AG04450 (cell line): ENCODE measurements at regions of chr10 and their contacts with region 1.

Region 1: GRCh38 chr10:68208424-68209042 is 23.4 kb downstream of the ATOH7 start:
- DNase-seq: no peak
- H3K4me3 ChIP-seq: no peak overlapping the region
- H3K27ac ChIP-seq: no peak overlapping the region
- H3K27me3 ChIP-seq: no peaks in the 10 kb centered on the region
- CTCF ChIP-seq: peak; percentile 72

Region 2: DNA sequence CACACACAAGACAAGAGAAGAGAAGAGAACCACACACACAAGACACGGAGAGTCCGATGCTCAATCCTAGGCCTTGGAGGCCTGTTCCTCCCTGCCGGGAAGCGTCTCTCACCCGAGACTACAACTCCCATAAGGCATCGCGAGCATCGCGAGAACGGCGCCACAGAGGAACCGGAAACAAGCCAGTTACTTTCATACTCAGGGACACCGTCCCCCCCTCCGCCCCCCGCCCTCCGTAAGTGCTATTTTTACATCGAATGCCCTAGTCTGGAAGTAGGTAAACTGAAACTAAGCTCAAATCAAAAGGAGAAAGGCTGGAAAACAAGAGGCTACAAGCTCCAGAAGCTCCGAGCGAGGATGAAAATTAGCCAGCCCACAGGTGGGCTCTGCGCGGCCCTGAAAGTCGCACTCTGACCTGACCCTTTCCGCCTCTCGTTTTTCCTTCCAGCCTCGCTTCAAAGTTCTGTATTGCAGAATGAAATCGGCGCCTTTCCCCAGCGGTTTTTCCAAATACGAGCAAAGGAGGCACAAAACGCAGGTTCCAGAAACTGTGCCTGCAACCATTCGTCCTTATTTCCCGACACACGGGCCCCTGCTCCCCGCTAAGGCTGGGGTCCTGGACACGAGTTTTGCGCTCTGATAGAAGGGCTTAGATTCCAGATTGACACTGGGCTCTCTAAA is 359.1 kb before region 1 on chr10:
- CTCF ChIA-PET with region 1: no interaction called
- POLR2A ChIA-PET with region 1: no interaction called
- DNase-seq: peak; percentile 87
- H3K4me3 ChIP-seq: peak overlapping the region; percentile 79
- H3K27ac ChIP-seq: peak overlapping the region; percentile 96
- H3K27me3 ChIP-seq: no peaks in the 10 kb centered on the region
- CTCF ChIP-seq: no peak

Region 3: GRCh38 chr10:68082872-68083271 is 125.7 kb before region 1 on chr10:
- CTCF ChIA-PET with region 1: interaction called, 37 read pairs
- POLR2A ChIA-PET with region 1: no interaction called
- DNase-seq: no peak
- H3K4me3 ChIP-seq: no peak overlapping the region
- H3K27ac ChIP-seq: no peak overlapping the region
- H3K27me3 ChIP-seq: no peaks in the 10 kb centered on the region
- CTCF ChIP-seq: peak; percentile 62

Region 4: GRCh38 chr10:68110027-68110426 is 98.5 kb before region 1 on chr10:
- CTCF ChIA-PET with region 1: no interaction called
- POLR2A ChIA-PET with region 1: no interaction called
- DNase-seq: no peak
- H3K4me3 ChIP-seq: peak overlapping the region; percentile 28
- H3K27ac ChIP-seq: no peak overlapping the region
- H3K27me3 ChIP-seq: no peaks in the 10 kb centered on the region
- CTCF ChIP-seq: no peak

Region 5: DNA sequence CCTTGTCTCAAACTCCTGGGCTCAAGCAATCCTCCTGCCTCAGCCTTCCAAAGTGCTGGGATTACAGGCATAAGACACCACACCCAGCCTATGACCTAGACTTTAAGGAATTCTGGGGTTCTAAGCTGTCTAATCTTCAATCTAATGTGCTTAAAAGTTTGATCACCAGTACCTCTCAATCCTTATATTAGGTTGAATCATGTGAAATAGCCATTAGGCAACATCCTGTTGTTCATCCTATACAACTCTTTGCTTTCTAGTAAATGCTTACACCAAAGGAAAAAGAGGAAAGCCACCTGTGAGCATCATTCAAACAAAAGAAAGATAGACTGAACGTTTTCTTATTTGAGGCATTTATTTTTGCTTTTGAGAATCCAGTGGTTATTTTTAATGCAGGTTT is 32.6 kb before region 1 on chr10:
- CTCF ChIA-PET with region 1: interaction called, 13 read pairs
- POLR2A ChIA-PET with region 1: no interaction called
- DNase-seq: no peak
- H3K4me3 ChIP-seq: no peak overlapping the region
- H3K27ac ChIP-seq: no peak overlapping the region
- H3K27me3 ChIP-seq: no peaks in the 10 kb centered on the region
- CTCF ChIP-seq: no peak

Region 6: GRCh38 chr10:68196701-68197100 is 11.8 kb before region 1 on chr10:
- CTCF ChIA-PET with region 1: interaction called, 15 read pairs
- POLR2A ChIA-PET with region 1: no interaction called
- DNase-seq: no peak
- H3K4me3 ChIP-seq: no peak overlapping the region
- H3K27ac ChIP-seq: no peak overlapping the region
- H3K27me3 ChIP-seq: no peaks in the 10 kb centered on the region
- CTCF ChIP-seq: no peak

Region 7: DNA sequence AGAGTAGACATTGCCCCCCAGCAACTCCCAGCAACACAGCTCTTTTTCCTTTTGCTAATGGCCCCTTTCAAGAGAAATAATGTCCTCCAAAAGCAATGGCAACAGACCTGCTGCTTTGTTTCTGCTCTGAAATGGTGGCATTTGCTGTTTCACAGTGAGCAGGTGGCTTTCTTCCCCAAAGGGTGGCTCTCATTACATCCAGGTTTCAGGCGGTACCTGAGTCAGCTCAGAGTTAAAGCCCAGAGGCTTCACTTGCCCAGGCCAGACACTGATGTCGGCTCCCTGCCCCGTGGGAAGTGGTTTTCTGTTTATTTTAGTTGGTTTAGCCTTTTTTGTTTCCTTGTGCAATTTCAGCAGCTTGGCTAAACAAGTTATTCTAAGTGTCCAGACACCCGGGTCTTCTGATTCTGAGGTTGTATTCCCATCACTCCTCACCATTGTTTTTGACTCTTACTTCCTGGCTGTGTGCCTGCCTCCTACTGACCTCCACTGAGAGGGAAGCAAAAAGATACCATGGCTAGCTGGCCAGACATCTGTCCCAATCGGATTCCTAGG is 31.1 kb after region 1 on chr10:
- CTCF ChIA-PET with region 1: interaction called, 11 read pairs
- POLR2A ChIA-PET with region 1: no interaction called
- DNase-seq: no peak
- H3K4me3 ChIP-seq: no peak overlapping the region
- H3K27ac ChIP-seq: no peak overlapping the region
- H3K27me3 ChIP-seq: peaks cover 19% of the 10 kb centered on the region
- CTCF ChIP-seq: no peak

Region 8: GRCh38 chr10:68301790-68302502 is 93.4 kb after region 1 on chr10:
- CTCF ChIA-PET with region 1: interaction called, 163 read pairs
- POLR2A ChIA-PET with region 1: interaction called, 4 read pairs
- DNase-seq: peak; percentile 34
- H3K4me3 ChIP-seq: no peak overlapping the region
- H3K27ac ChIP-seq: no peak overlapping the region
- H3K27me3 ChIP-seq: no peaks in the 10 kb centered on the region
- CTCF ChIP-seq: peak; percentile 69

Region 9: GRCh38 chr10:69087590-69088470 is 879.3 kb after region 1 on chr10 and contains the start of gene SRGN:
- CTCF ChIA-PET with region 1: no interaction called
- POLR2A ChIA-PET with region 1: no interaction called
- DNase-seq: peak; percentile 33
- H3K4me3 ChIP-seq: peak within 1 kb of the TSS; percentile 60
- H3K27ac ChIP-seq: peak within 1 kb of the TSS; percentile 47
- H3K27me3 ChIP-seq: no peaks in the 10 kb centered on the region
- CTCF ChIP-seq: no peak
- polyA plus RNA-seq, gene SRGN: 137 and 154 TPM in 2 replicates